ENCODE measurements at regions of chr6 and their contacts with region 1.

Region 1: GRCh38 chr6:29752451-29753308 is 29.4 kb downstream of the HLA-F start:
- DNase-seq: peak; percentile 91
- H3K4me3 Mint-ChIP-seq: peak overlapping the region; percentile 90
- H3K27ac Mint-ChIP-seq: peak overlapping the region; percentile 81
- H3K4me1 Mint-ChIP-seq: peaks cover 23% of the 10 kb centered on the region
- H3K27me3 Mint-ChIP-seq: peaks cover 11% of the 10 kb centered on the region

Region 2: DNA sequence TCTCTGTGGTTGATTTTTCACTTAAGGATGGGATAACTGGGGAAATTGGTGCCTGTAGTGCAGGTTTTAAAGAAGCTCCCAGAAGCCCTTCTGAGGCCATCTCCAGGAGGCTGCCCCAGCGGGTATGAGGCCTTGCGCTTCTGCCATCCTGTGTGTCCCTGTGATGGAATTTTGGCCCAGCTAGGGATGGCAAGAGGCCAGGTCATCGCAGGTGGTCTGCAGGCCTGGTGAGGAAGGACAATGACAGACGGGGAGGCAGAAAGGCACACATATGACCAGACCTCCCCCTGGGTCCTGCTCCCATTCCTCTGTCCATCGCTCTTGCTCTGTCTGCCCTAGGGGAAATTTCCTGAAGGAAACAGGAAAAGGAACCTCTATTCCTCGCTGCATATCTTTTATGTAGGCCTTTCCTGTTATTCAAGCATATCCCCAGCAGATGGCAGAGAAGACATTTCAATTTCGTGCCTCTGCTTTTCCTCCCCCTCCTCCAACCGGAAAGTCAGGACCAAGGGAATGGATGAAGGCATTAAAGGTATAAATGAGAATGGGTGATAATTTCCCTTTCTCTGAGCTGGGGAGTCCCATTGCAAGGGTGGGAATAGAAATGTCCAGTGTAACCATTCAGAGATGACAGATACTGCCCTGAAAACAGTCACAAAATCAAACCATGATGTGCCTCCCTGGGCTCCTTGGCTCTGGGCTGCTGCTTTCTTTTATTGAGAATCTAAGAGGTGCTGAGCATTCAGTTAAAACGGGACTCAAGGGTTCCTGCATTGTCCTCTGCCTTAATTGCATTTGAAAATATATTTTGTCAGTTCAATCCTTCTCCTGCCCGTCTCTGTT is 47.1 kb before region 1 on chr6:
- CTCF ChIA-PET with region 1: interaction called, 34 read pairs
- POLR2A ChIA-PET with region 1: no interaction called
- intact Hi-C with region 1: loop called (anchors 1 kb)
- DNase-seq: no peak
- H3K4me3 Mint-ChIP-seq: peak overlapping the region; percentile 6
- H3K27ac Mint-ChIP-seq: no peak overlapping the region
- H3K4me1 Mint-ChIP-seq: peaks cover 50% of the 10 kb centered on the region
- H3K27me3 Mint-ChIP-seq: peaks cover 13% of the 10 kb centered on the region

Region 3: GRCh38 chr6:29737707-29738630 is 14.7 kb before region 1 on chr6:
- CTCF ChIA-PET with region 1: interaction called, 103 read pairs
- POLR2A ChIA-PET with region 1: interaction called, 4 read pairs
- intact Hi-C with region 1: loop called (anchors 2 kb)
- DNase-seq: peak; percentile 78
- H3K4me3 Mint-ChIP-seq: no peak overlapping the region
- H3K27ac Mint-ChIP-seq: no peak overlapping the region
- H3K4me1 Mint-ChIP-seq: peaks cover 6% of the 10 kb centered on the region
- H3K27me3 Mint-ChIP-seq: no peaks in the 10 kb centered on the region

Region 4: GRCh38 chr6:29827579-29828470 is 75.1 kb after region 1 on chr6 and contains the start of gene HLA-G:
- CTCF ChIA-PET with region 1: interaction called, 4 read pairs
- POLR2A ChIA-PET with region 1: no interaction called
- intact Hi-C with region 1: loop called (anchors 5 kb)
- DNase-seq: no peak
- H3K4me3 Mint-ChIP-seq: peak within 1 kb of the TSS; percentile 53
- H3K27ac Mint-ChIP-seq: no peak within 1 kb of the TSS
- H3K4me1 Mint-ChIP-seq: peaks cover 9% of the 10 kb centered on the region
- H3K27me3 Mint-ChIP-seq: peaks cover 43% of the 10 kb centered on the region
- total RNA-seq, gene HLA-G: 0.19 to 0.38 TPM

Region 5: GRCh38 chr6:29964887-29965562 is 212.3 kb after region 1 on chr6:
- CTCF ChIA-PET with region 1: no interaction called
- POLR2A ChIA-PET with region 1: no interaction called
- intact Hi-C with region 1: loop called (anchors 5 kb)
- DNase-seq: peak; percentile 88
- H3K4me3 Mint-ChIP-seq: peak overlapping the region; percentile 82
- H3K27ac Mint-ChIP-seq: peak overlapping the region; percentile 95
- H3K4me1 Mint-ChIP-seq: peaks cover 43% of the 10 kb centered on the region
- H3K27me3 Mint-ChIP-seq: no peaks in the 10 kb centered on the region

Region 6: GRCh38 chr6:30470968-30471367 is 718.3 kb after region 1 on chr6:
- CTCF ChIA-PET with region 1: no interaction called
- POLR2A ChIA-PET with region 1: no interaction called
- intact Hi-C with region 1: no loop called
- DNase-seq: no peak
- H3K4me3 Mint-ChIP-seq: no peak overlapping the region
- H3K27ac Mint-ChIP-seq: no peak overlapping the region
- H3K4me1 Mint-ChIP-seq: peaks cover 7% of the 10 kb centered on the region
- H3K27me3 Mint-ChIP-seq: peaks cover 62% of the 10 kb centered on the region

Measured in activated CD4-positive, alpha-beta memory T cell treated with anti-CD3 and anti-CD28 coated beads for 36 hours (primary cell).